ENCODE measurements at regions of chr6 and their contacts with region 1.

Region 1: DNA sequence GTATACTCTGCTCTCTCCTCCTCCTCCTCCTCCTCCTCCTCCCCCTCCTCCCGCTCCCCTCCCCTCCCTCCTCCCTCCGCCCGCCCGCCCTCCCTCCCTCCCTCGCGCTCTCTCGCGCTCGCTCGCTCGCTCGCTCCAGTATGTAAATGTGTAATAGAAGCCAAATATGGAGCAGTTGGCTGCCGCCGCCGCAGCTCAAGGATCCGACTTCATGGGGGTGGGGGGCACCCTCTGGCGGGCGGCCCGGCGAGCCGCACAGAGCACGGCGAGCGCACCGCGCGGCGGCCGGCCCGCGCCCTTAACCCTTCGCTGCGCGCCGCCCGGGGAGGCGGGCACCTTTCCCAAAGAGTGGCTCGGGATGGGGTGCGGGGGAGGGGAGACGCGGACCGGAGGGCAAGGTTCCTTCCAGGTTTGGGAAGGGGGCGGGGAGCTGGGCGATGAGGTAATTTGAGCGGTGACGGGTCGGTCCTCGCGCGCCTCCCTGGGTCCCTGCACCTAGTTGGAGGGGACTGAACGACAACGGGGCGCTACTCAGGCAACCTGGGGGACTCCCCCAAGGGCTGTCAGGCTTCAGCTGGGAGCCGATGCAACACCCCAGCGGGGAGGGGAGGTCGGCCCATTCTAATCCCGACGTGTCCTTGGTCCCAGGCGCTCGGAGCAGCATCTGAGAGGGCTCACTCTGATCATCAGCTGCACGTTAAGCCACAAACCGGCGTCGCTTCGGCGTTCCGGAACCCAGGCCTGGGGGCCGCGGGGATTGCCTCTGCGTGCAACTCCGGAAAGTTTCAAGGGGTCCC is 409 bp upstream of the ATXN1 start:
- DNase-seq: peak; percentile 80
- H3K4me3 ChIP-seq: peak overlapping the region; percentile 54 to 80 (median 74)
- H3K27ac ChIP-seq: peak overlapping the region; percentile 83
- H3K4me1 ChIP-seq: peaks cover 35% of the 10 kb centered on the region
- H3K27me3 ChIP-seq: no peaks in the 10 kb centered on the region
- CTCF ChIP-seq: peak in 1 of 2 donors; percentile 35

Region 2: DNA sequence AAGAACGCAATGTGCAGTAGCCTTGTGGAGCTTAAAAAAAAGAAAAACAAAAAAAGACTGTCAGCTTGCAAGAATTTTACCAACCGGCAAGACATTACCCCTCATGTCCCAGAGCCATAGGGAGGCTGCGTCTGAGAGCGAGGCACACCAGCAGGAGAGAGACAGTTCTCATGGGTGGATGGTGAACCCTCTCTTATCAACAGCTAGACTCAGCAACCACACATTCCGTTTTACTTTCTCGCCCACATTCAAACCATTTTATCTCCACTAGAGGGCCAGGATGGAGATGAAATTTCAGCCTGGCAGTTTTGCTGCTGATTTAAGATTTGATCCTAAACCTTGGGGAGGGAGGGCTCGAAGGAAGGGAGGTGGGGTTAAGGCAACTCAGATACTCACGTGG is 247.4 kb before region 1 on chr6:
- CTCF ChIA-PET with region 1: interaction called, 5 read pairs
- dilution Hi-C with region 1: no loop called
- in situ Hi-C with region 1: no loop called
- intact Hi-C with region 1: loop called (anchors 1 kb)
- DNase-seq: peak; percentile 18
- H3K4me3 ChIP-seq: no peak overlapping the region
- H3K27ac ChIP-seq: no peak overlapping the region
- H3K4me1 ChIP-seq: peaks cover 7% of the 10 kb centered on the region
- H3K27me3 ChIP-seq: no peaks in the 10 kb centered on the region
- CTCF ChIP-seq: peak; percentile 44 to 58

Region 3: DNA sequence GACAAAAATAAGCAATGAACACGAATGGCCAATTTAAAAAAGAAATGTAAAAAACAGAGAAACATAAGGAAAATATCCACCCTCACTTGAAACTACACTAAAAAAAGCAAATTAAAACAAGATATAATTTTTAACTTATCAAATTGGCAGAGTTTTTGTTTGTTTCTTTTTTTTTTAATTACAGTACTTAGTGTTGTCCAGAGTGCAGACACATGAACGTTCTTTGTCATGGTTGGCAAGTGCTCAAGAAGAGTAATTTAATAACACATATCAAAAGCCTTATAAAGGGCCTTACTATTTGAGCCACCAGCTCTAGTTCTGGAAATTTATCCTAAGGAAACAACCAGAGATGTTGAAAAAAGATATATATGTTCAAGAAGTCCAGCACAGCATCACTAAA is 142.7 kb before region 1 on chr6:
- CTCF ChIA-PET with region 1: no interaction called
- dilution Hi-C with region 1: no loop called
- in situ Hi-C with region 1: no loop called
- intact Hi-C with region 1: no loop called
- DNase-seq: no peak
- H3K4me3 ChIP-seq: no peak overlapping the region
- H3K27ac ChIP-seq: no peak overlapping the region
- H3K4me1 ChIP-seq: no peaks in the 10 kb centered on the region
- H3K27me3 ChIP-seq: no peaks in the 10 kb centered on the region
- CTCF ChIP-seq: no peak

Region 4: GRCh38 chr6:16684896-16685554 is 76.6 kb before region 1 on chr6:
- CTCF ChIA-PET with region 1: no interaction called
- dilution Hi-C with region 1: no loop called
- in situ Hi-C with region 1: loop called in 1 of 2 experiments (anchors 5 kb)
- intact Hi-C with region 1: loop called (anchors 1 kb)
- DNase-seq: peak; percentile 97
- H3K4me3 ChIP-seq: no peak overlapping the region
- H3K27ac ChIP-seq: peak overlapping the region; percentile 91
- H3K4me1 ChIP-seq: peaks cover 63% of the 10 kb centered on the region
- H3K27me3 ChIP-seq: no peaks in the 10 kb centered on the region
- CTCF ChIP-seq: no peak

Region 5: GRCh38 chr6:16723826-16724225 is 37.8 kb before region 1 on chr6:
- CTCF ChIA-PET with region 1: no interaction called
- dilution Hi-C with region 1: no loop called
- in situ Hi-C with region 1: loop called in 1 of 2 experiments (anchors 5 kb)
- intact Hi-C with region 1: loop called (anchors 1 kb)
- DNase-seq: peak; percentile 92
- H3K4me3 ChIP-seq: no peak overlapping the region
- H3K27ac ChIP-seq: peak overlapping the region; percentile 85
- H3K4me1 ChIP-seq: peaks cover 61% of the 10 kb centered on the region
- H3K27me3 ChIP-seq: no peaks in the 10 kb centered on the region
- CTCF ChIP-seq: no peak

Region 6: DNA sequence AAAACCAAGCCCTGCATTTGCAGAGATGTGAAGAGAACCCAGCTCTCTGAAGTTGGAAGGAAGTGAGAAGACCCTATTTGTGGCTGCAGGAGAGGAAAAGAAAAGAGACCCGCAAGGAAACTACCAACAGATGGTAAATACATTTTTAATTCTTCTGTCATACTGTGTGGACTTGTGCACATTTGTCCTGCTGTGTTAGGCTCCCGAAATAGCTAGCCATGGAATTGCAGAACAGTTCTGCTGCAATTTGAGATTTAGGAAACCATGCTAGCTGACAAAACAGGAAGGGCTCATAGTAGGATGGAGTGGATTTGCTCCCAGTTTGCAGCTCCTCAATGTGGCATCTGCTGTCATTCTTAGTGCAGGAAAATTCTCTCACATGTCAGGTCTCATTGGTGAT is 11.7 kb after region 1 on chr6:
- CTCF ChIA-PET with region 1: interaction called, 15 read pairs
- dilution Hi-C with region 1: no loop called
- in situ Hi-C with region 1: no loop called
- intact Hi-C with region 1: no loop called
- DNase-seq: no peak
- H3K4me3 ChIP-seq: no peak overlapping the region
- H3K27ac ChIP-seq: no peak overlapping the region
- H3K4me1 ChIP-seq: peaks cover 26% of the 10 kb centered on the region
- H3K27me3 ChIP-seq: no peaks in the 10 kb centered on the region
- CTCF ChIP-seq: no peak

Region 7: GRCh38 chr6:16947375-16948015 is 185.8 kb after region 1 on chr6:
- CTCF ChIA-PET with region 1: no interaction called
- dilution Hi-C with region 1: no loop called
- in situ Hi-C with region 1: no loop called
- intact Hi-C with region 1: loop called (anchors 5 kb)
- DNase-seq: peak; percentile 75
- H3K4me3 ChIP-seq: no peak overlapping the region
- H3K27ac ChIP-seq: no peak overlapping the region
- H3K4me1 ChIP-seq: peaks cover 10% of the 10 kb centered on the region
- H3K27me3 ChIP-seq: no peaks in the 10 kb centered on the region
- CTCF ChIP-seq: peak in 1 of 2 donors; percentile 3

Region 8: GRCh38 chr6:17086469-17086868 is 324.8 kb after region 1 on chr6:
- CTCF ChIA-PET with region 1: interaction called, 10 read pairs
- dilution Hi-C with region 1: no loop called
- in situ Hi-C with region 1: loop called in 1 of 2 experiments (anchors 10 kb)
- intact Hi-C with region 1: loop called (anchors 1 kb)
- DNase-seq: peak; percentile 59
- H3K4me3 ChIP-seq: no peak overlapping the region
- H3K27ac ChIP-seq: no peak overlapping the region
- H3K4me1 ChIP-seq: no peaks in the 10 kb centered on the region
- H3K27me3 ChIP-seq: peaks cover 4% of the 10 kb centered on the region
- CTCF ChIP-seq: peak; percentile 54 to 71